ENCODE measurements at regions of chr5 and their contacts with region 1.

Region 1: GRCh38 chr5:112097768-112098167 is 321.3 kb downstream of the EPB41L4A start:
- DNase-seq: no peak
- H3K4me3 ChIP-seq: no peak overlapping the region
- H3K27ac ChIP-seq: no peak overlapping the region
- H3K4me1 ChIP-seq: no peaks in the 10 kb centered on the region
- H3K27me3 ChIP-seq: no peaks in the 10 kb centered on the region
- CTCF ChIP-seq: no peak
- EP300 ChIP-seq: no peak
- POLR2A ChIP-seq: no peak

Region 2: DNA sequence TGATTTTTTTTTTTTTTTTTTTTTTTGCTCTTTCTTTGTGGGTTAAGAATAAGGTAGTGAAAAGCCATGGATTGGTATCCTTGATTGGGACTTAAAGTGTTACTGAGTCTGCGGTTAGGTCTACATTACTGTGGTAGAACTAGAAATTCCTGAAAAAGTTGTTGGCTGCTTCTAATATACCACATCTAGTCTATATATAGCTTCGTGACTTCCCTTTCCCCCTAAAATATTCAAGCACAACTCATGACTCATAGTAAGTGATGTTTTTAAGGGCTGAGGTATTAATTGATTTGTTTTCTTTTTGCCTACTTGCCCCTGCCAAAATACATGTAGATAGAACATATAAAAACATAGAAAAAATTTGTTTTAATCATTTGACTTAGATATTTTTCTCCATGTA is 1618.9 kb before region 1 on chr5:
- in situ Hi-C with region 1: no loop called
- intact Hi-C with region 1: no loop called
- DNase-seq: no peak
- H3K4me3 ChIP-seq: no peak overlapping the region
- H3K27ac ChIP-seq: no peak overlapping the region
- H3K4me1 ChIP-seq: no peaks in the 10 kb centered on the region
- H3K27me3 ChIP-seq: no peaks in the 10 kb centered on the region
- CTCF ChIP-seq: no peak
- EP300 ChIP-seq: no peak
- POLR2A ChIP-seq: no peak

Region 3: DNA sequence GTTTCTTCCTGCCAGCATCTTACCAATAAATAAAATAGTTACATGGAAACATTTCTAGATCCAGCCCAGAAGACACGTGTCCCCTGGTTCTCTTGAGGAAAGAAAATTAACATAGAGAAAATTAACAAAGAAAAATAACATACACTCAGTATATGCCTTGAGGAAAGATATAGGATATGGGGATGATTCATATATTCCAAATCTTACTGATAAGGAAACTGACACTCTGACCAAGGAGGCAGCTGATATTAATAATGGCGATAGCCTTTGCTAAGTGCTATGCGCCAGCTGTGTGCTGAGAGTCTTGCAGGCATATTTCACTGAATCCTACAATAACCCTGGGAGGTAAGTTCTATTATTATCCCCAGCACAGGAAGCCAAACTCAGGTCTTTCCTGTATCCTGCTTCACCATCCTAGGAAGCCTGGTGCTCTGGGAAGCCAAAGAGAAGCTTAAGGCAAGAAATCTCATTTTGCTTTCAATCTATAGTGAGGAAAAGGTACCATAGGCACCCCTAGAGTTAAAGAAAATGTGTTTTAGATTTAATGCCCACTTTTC is 38.1 kb before region 1 on chr5:
- in situ Hi-C with region 1: no loop called
- intact Hi-C with region 1: loop called (anchors 5 kb)
- DNase-seq: no peak
- H3K4me3 ChIP-seq: no peak overlapping the region
- H3K27ac ChIP-seq: no peak overlapping the region
- H3K4me1 ChIP-seq: no peaks in the 10 kb centered on the region
- H3K27me3 ChIP-seq: no peaks in the 10 kb centered on the region
- CTCF ChIP-seq: no peak
- EP300 ChIP-seq: no peak
- POLR2A ChIP-seq: no peak

Region 4: GRCh38 chr5:112070022-112070421 is 27.7 kb before region 1 on chr5:
- in situ Hi-C with region 1: no loop called
- intact Hi-C with region 1: no loop called
- DNase-seq: no peak
- H3K4me3 ChIP-seq: no peak overlapping the region
- H3K27ac ChIP-seq: no peak overlapping the region
- H3K4me1 ChIP-seq: no peaks in the 10 kb centered on the region
- H3K27me3 ChIP-seq: no peaks in the 10 kb centered on the region
- CTCF ChIP-seq: no peak
- EP300 ChIP-seq: no peak
- POLR2A ChIP-seq: no peak

Measured in transverse colon (tissue), 4 donors.